MCF 10A (cell line): ENCODE measurements at regions of chr2 and their contacts with region 1.

Region 1: GRCh38 chr2:223970343-223971128 is 13.3 kb downstream of the MRPL44 start:
- DNase-seq: peak; percentile 66
- H3K4me3 Mint-ChIP-seq: no peak overlapping the region
- H3K27ac Mint-ChIP-seq: no peak overlapping the region
- H3K4me1 Mint-ChIP-seq: no peaks in the 10 kb centered on the region
- H3K27me3 Mint-ChIP-seq: no peaks in the 10 kb centered on the region
- CTCF ChIP-seq: peak; percentile 75

Region 2: GRCh38 chr2:223957092-223957851 is 13.3 kb before region 1 on chr2 and contains the start of gene MRPL44:
- CTCF ChIA-PET with region 1: interaction called, 42 read pairs
- POLR2A ChIA-PET with region 1: interaction called, 20 read pairs
- intact Hi-C with region 1: no loop called
- DNase-seq: peak; percentile 95
- H3K4me3 Mint-ChIP-seq: peak within 1 kb of the TSS; percentile 92
- H3K27ac Mint-ChIP-seq: peak within 1 kb of the TSS; percentile 95
- H3K4me1 Mint-ChIP-seq: peaks cover 15% of the 10 kb centered on the region
- H3K27me3 Mint-ChIP-seq: no peaks in the 10 kb centered on the region
- CTCF ChIP-seq: no peak
- total RNA-seq, gene MRPL44: 27.4 and 31.2 TPM in 2 replicates

Region 3: GRCh38 chr2:224278531-224278930 is 308.0 kb after region 1 on chr2:
- CTCF ChIA-PET with region 1: interaction called, 97 read pairs
- POLR2A ChIA-PET with region 1: no interaction called
- intact Hi-C with region 1: no loop called
- DNase-seq: no peak
- H3K4me3 Mint-ChIP-seq: no peak overlapping the region
- H3K27ac Mint-ChIP-seq: no peak overlapping the region
- H3K4me1 Mint-ChIP-seq: peaks cover 9% of the 10 kb centered on the region
- H3K27me3 Mint-ChIP-seq: no peaks in the 10 kb centered on the region
- CTCF ChIP-seq: no peak

Region 4: DNA sequence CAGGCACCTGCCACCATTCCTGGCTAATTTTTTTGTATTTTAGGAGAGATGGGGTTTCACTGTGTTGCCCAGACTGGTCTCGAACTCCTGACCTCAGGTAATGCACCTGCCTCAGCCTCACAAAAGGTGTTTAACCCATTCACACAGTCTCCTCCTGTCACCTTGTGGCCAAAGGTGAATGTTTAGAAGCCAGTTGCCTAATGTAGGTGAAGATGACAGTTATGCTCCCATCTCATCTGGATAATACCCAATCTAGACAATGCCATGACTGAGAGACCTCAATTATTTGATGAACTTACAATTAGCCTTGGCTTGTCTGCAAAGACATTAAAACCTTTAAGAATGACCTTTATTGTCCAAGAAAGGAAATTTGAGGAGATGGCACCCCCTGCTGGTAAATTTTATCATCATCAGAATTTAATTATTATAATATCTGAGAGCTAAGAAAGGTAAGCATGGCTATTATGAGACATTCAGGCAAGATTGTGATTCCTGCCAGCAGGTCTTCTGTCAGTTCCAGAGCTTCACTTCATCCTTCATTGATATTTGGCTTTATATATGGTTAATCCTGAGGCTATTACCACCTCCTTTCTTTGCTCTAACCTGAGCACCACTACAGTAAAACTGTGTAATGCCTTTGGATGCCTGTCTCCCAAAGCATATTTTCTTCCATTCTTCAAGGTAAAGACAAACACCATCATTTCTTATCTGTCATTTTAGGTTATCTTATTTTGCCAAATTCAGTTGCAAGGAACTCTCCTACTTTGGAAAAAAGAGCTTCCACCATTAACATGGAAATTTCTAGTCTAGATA is 313.8 kb after region 1 on chr2:
- CTCF ChIA-PET with region 1: interaction called, 97 read pairs
- POLR2A ChIA-PET with region 1: interaction called, 8 read pairs
- intact Hi-C with region 1: loop called (anchors 1 kb)
- DNase-seq: peak; percentile 65
- H3K4me3 Mint-ChIP-seq: no peak overlapping the region
- H3K27ac Mint-ChIP-seq: no peak overlapping the region
- H3K4me1 Mint-ChIP-seq: no peaks in the 10 kb centered on the region
- H3K27me3 Mint-ChIP-seq: peaks cover 25% of the 10 kb centered on the region
- CTCF ChIP-seq: peak; percentile 85

Region 5: DNA sequence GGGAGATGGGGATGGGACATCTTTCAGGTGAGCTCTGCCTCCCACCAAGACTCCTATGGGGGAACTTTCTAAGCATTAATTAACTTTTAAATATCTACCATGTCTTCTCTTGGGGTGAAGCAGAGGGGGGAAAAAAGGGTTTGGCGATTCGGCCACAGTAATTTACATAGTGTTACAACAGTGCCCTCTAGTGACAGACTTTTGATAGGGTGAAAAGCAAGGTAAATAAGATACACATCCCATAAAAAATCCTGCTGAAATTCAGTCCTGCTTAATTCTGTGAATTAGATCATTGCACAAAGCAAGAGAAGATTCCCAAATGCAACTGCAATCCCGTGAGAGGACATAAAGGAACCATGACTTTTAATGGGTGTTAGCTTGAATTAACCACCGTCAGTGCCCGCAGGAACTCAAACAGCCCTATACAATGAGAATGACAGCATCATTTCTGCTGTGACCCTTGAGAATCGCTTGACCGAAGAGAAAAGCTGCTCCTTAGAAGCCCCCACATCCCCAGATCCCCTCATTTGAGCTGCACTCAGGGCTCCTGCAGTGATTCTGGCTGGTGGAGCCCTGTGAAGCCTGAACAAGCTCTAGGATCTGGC is 398.6 kb after region 1 on chr2:
- CTCF ChIA-PET with region 1: interaction called, 11 read pairs
- POLR2A ChIA-PET with region 1: no interaction called
- intact Hi-C with region 1: loop called (anchors 1 kb)
- DNase-seq: peak; percentile 66
- H3K4me3 Mint-ChIP-seq: no peak overlapping the region
- H3K27ac Mint-ChIP-seq: no peak overlapping the region
- H3K4me1 Mint-ChIP-seq: peaks cover 6% of the 10 kb centered on the region
- H3K27me3 Mint-ChIP-seq: no peaks in the 10 kb centered on the region
- CTCF ChIP-seq: peak; percentile 61